ENCODE measurements at regions of chr17 and their contacts with region 1.

Region 1: DNA sequence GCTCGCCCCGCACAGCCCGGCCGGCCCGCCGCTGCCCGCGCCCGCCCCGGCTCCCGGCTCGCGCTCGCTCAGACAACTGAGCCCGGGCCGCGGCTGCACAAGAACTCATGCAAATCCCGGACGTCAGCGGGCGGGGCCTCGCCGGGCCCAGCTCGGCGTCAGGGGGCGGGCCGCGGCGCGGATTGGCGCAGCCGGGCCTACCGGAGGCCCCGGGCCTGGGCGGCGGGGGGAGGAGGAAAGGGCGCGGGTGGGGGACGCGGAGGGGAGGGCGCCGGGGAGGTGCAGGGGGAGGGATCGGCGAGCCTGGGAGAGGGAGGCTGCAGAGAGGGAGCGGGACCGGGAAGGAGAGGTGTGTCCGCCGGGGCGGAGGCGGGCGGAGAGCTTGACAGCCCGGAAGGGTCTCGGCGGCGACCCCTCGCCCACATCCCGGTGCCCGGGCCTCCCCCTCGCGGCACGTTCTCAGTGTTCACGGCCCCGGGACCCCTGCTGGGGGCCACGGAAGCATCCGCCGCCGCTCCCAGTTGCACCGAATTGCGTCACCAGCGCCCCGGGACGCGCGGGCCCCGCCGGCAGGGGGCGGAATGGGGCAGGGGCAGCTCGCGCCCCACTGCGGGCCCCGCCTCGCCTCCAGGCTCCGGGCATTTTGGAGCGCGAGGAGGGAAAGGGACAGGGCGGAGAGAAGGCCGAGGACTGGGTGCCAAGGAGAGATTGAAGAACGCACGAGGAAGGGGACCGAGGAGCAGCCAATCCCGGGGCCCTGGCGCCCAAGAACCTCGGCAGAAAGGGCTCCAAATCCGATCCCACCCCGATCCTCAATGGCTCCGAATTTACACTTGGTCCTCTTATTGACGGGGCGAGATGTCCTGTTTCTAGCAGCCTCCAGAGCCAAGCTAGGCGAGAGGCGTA is at the start of gene CBX4:
- DNase-seq: peak; percentile 84
- H3K4me3 Mint-ChIP-seq: peak within 1 kb of the TSS; percentile 94
- H3K27ac Mint-ChIP-seq: peak within 1 kb of the TSS; percentile 94
- H3K4me1 Mint-ChIP-seq: peaks cover 19% of the 10 kb centered on the region
- H3K27me3 Mint-ChIP-seq: peaks cover 27% of the 10 kb centered on the region
- total RNA-seq, gene CBX4: 22.4 and 23.8 TPM in 2 replicates

Region 2: DNA sequence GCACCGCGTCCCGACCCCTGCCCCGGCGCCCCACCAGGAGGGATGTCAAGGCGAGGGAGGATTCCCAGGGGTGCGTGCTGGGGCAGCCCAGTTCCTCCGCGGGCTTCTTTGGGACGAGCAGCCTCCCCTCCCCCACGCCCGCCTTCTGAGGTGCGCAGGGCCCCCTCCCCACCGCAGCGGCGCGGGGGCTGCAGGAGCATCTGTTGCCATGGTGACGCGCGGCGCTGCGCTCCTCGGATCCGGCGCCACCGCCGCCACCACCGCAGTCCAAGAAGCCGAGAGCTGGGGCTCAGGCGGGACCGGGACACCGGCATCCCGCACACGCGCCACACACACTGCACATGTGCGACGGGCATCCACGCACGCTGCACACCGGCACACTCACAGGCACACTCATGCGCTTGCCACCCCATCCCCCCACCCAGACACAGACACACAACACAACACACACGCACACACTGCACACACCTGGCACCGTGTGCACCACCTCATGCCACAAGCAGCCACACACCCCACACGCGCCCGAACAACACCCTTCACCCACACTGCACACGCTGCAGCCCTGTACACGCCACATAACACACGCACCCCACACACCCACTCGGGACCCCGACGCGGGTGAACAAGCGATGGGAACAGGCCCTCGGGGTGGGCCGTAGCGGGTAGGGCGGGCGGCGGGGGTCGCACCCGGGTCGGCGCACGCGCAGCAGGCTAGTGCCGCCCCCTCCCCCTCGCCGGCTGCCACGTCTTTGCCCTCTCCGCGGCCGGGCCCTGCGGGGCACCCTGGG is 91.9 kb before region 1 on chr17:
- intact Hi-C with region 1: loop called (anchors 2 kb)
- DNase-seq: no peak
- H3K4me3 Mint-ChIP-seq: no peak overlapping the region
- H3K27ac Mint-ChIP-seq: peak overlapping the region; percentile 52
- H3K4me1 Mint-ChIP-seq: peaks cover 11% of the 10 kb centered on the region
- H3K27me3 Mint-ChIP-seq: peaks cover 41% of the 10 kb centered on the region

Region 3: GRCh38 chr17:79803997-79804855 is 35.4 kb before region 1 on chr17:
- intact Hi-C with region 1: loop called (anchors 1 kb)
- DNase-seq: peak; percentile 55
- H3K4me3 Mint-ChIP-seq: peak overlapping the region; percentile 75
- H3K27ac Mint-ChIP-seq: peak overlapping the region; percentile 95
- H3K4me1 Mint-ChIP-seq: peaks cover 48% of the 10 kb centered on the region
- H3K27me3 Mint-ChIP-seq: peaks cover 72% of the 10 kb centered on the region

Region 4: GRCh38 chr17:79815836-79816461 is 23.7 kb before region 1 on chr17:
- intact Hi-C with region 1: no loop called
- DNase-seq: no peak
- H3K4me3 Mint-ChIP-seq: no peak overlapping the region
- H3K27ac Mint-ChIP-seq: peak overlapping the region; percentile 23
- H3K4me1 Mint-ChIP-seq: peaks cover 15% of the 10 kb centered on the region
- H3K27me3 Mint-ChIP-seq: peaks cover 63% of the 10 kb centered on the region

Region 5: DNA sequence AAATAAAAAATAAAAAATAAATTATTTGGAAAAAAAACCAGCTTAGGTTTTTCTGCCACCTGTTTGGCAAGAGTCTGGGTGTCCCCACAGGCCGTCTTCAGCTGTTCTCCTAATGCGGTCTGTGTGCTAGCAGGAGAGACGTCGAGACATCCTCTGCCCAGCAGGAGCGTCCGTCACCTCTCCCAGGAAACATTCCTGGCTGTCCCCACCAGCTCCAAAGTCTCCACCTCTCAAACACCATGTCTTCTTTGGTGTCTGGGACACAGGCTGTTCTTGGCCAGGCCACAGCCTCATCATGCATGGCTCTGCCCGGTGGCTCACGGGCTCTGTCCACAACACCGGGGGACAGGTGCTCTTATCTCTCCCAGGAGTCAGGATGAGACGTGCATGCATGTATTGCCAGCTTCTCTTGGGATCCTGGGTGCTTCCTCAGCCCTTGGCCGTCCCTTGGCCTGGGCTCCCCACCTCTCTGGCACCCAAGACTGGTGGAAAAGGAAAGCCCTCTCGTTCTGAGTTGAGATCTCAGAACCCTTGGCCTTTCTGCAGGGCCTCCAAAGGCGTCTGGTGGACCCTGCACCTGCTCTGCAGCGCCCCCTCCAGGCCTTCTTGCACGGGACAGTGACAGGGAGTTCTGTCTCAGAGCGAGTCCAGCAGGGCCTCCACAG is 84.5 kb after region 1 on chr17:
- intact Hi-C with region 1: loop called (anchors 10 kb)
- DNase-seq: peak; percentile 14
- H3K4me3 Mint-ChIP-seq: no peak overlapping the region
- H3K27ac Mint-ChIP-seq: no peak overlapping the region
- H3K4me1 Mint-ChIP-seq: no peaks in the 10 kb centered on the region
- H3K27me3 Mint-ChIP-seq: peaks cover 6% of the 10 kb centered on the region

Region 6: GRCh38 chr17:80035943-80036714 is 196.5 kb after region 1 on chr17 and contains the start of gene CCDC40:
- intact Hi-C with region 1: loop called (anchors 2 kb)
- DNase-seq: peak; percentile 77
- H3K4me3 Mint-ChIP-seq: peak within 1 kb of the TSS; percentile 85
- H3K27ac Mint-ChIP-seq: peak within 1 kb of the TSS; percentile 91
- H3K4me1 Mint-ChIP-seq: peaks cover 5% of the 10 kb centered on the region
- H3K27me3 Mint-ChIP-seq: peaks cover 50% of the 10 kb centered on the region
- total RNA-seq, gene CCDC40: 0.15 and 0.16 TPM in 2 replicates

Measured in activated T-helper 1 cell treated with anti-CD3 and anti-CD28 coated beads, Interleukin-12 subunit alpha, Interleukin-12 subunit beta, Interleukin-2, Interleukin-4 antibody, amounts not matched to agents 30 ng/mL and 10 ng/mL and 1 ng/mL, durations not matched to agents 14 hours and 24 hours and 36 hours (primary cell).